ENCODE measurements at regions of chr2 and their contacts with region 1.

Region 1: DNA sequence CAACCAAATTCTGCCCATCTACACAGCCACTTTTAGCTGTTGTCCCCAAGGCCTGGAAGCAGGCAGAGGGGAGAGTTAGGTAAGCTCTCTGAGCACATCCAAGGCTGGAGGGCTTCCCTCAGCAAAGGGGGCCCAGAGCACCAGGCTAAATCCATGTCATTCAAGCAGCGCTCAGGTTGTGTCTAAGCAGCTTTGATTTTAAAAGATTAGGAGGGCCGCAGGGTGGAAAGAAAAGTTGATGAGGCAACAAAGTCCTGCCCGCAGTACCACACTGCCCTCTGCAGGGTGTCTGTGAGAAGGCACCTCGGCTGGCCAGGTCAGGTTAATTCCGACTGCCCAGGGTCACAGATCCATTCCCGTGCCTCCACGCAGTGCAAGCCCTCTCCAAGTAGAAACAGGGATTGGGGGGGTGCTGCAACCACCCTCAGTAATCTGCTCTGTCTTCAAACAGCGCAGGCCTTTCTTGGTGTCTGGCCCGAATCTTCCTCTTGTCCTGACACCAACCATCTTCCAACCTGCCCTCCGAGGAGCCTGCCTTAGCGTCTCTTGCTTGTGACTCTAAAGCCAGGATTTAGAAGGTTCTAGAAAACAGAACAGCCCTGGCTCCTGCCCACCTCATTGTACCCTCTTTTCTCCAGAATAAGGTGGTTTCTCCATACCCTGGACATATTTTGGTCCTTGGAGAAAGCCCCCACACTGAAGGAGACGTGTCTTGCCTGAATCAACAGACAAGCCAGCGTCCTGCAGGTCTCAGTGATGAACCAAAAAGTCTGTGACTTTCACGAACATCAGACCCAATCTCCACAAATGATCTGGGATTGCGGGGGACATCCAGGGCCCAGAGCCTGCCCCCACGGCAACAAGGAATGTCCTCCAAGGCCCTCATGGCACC is 289.2 kb downstream of the TNS1 start:
- DNase-seq: peak; percentile 75
- H3K4me3 ChIP-seq: no peak overlapping the region
- H3K27ac ChIP-seq: peak overlapping the region; percentile 34 to 76 (median 58)
- H3K4me1 ChIP-seq: peaks cover 3 to 36% (median 7%) of the 10 kb centered on the region in 4 donors
- H3K27me3 ChIP-seq: no peaks in the 10 kb centered on the region
- CTCF ChIP-seq: peak; percentile 86 to 97 (median 94)
- EP300 ChIP-seq: no peak
- POLR2A ChIP-seq: no peak

Region 2: GRCh38 chr2:216687646-216688045 is 1026.0 kb before region 1 on chr2:
- in situ Hi-C with region 1: loop called (anchors 10 to 25 kb)
- intact Hi-C with region 1: loop called (anchors 10 kb)
- DNase-seq: no peak
- H3K4me3 ChIP-seq: no peak overlapping the region
- H3K27ac ChIP-seq: peak overlapping the region; percentile 45 to 85 (median 69)
- H3K4me1 ChIP-seq: peaks cover 17 to 76% (median 22%) of the 10 kb centered on the region in 4 donors
- H3K27me3 ChIP-seq: peaks cover 48% of the 10 kb centered on the region
- CTCF ChIP-seq: peak in 1 of 5 experiments; percentile 10
- EP300 ChIP-seq: no peak
- POLR2A ChIP-seq: no peak

Region 3: DNA sequence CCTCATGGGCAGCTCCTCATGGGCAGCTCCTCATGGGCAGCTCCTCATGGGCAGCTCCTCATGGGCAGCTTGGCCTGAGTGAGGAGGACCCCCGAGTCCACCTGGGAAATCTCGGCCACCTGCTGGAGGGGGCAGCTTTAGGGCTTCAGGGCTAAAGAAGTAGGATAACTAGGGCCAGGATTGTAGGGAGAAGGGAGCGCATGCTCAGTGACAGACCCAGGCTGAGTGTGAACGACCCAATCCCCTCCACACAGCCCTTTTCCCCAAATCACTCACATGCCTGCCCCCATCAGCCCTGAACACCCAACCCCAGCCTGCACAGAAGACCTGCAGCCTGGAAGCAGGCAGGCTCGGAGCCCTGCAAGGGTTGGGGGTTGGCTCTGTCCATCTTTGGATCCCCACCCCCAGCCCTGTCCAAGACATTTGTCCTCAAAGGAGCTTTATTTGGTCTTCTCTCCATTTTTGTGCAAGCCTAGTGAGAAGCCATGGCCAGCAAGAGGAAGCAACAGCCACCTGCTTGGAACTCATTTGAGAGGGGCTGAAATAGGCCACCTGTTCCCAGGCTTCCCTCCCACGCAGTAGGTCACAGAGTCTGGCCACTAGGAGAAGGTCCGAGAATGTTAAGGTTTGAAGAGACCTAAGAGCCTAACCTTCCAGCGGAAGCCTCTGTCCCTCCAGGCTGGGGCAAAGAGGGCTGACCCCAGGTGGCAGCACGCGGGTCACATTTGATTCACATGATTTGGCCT is 39.2 kb after region 1 on chr2:
- in situ Hi-C with region 1: no loop called
- intact Hi-C with region 1: loop called (anchors 1 kb)
- DNase-seq: no peak
- H3K4me3 ChIP-seq: no peak overlapping the region
- H3K27ac ChIP-seq: peak overlapping the region in 1 of 4 donors; percentile 54
- H3K4me1 ChIP-seq: peaks cover 0 to 19% (median 4%) of the 10 kb centered on the region in 4 donors
- H3K27me3 ChIP-seq: peaks cover 4% of the 10 kb centered on the region
- CTCF ChIP-seq: no peak
- EP300 ChIP-seq: no peak
- POLR2A ChIP-seq: no peak

Measured in transverse colon (tissue), 4 donors.